T-cell (primary cell): ENCODE measurements at regions of chrX and their contacts with region 1.

Region 1: GRCh38 chrX:66544181-66544580 is 94.7 kb downstream of the EDA2R start:
- DNase-seq: no peak
- ATAC-seq: no peak
- H3K4me3 ChIP-seq: no peak overlapping the region
- H3K4me3 Mint-ChIP-seq: no peak overlapping the region
- H3K27ac ChIP-seq: no peak overlapping the region
- H3K27ac Mint-ChIP-seq: no peak overlapping the region
- H3K4me1 ChIP-seq: no peaks in the 10 kb centered on the region
- H3K4me1 Mint-ChIP-seq: no peaks in the 10 kb centered on the region
- H3K27me3 ChIP-seq: no peaks in the 10 kb centered on the region
- H3K27me3 Mint-ChIP-seq: peaks cover 0 to 12% of the 10 kb centered on the region in 2 donors

Region 2: GRCh38 chrX:66437719-66438118 is 106.5 kb before region 1 on chrX:
- CTCF ChIA-PET with region 1: no interaction called
- POLR2A ChIA-PET with region 1: no interaction called
- DNase-seq: no peak
- ATAC-seq: no peak
- H3K4me3 ChIP-seq: no peak overlapping the region
- H3K4me3 Mint-ChIP-seq: no peak overlapping the region
- H3K27ac ChIP-seq: no peak overlapping the region
- H3K27ac Mint-ChIP-seq: no peak overlapping the region
- H3K4me1 ChIP-seq: no peaks in the 10 kb centered on the region
- H3K4me1 Mint-ChIP-seq: no peaks in the 10 kb centered on the region
- H3K27me3 ChIP-seq: peaks cover 0 to 5% of the 10 kb centered on the region in 2 experiments
- H3K27me3 Mint-ChIP-seq: peaks cover 12 to 42% of the 10 kb centered on the region in 2 donors

Region 3: DNA sequence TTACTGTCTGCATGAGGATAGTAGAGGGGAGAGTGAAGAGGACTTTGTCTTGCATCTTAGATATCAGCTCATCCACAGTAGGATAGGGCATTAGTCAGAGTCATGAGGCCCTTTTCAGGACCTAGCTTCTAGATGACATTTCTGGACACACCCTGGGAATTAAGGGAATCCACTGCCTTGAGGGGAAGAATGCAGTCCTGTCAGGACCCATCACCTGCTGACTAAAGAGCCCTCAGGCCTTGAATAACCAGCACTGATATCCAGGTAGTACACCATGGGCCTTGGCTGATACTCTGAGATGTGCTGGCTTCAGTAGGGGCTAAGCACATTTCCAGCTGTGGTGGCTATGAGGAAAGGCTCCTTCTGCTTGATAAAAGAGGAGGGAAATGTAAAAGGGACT is 39.7 kb before region 1 on chrX:
- CTCF ChIA-PET with region 1: no interaction called
- POLR2A ChIA-PET with region 1: interaction called in 1 of 2 experiments, 13 read pairs
- DNase-seq: no peak
- ATAC-seq: no peak
- H3K4me3 ChIP-seq: no peak overlapping the region
- H3K4me3 Mint-ChIP-seq: no peak overlapping the region
- H3K27ac ChIP-seq: no peak overlapping the region
- H3K27ac Mint-ChIP-seq: no peak overlapping the region
- H3K4me1 ChIP-seq: no peaks in the 10 kb centered on the region
- H3K4me1 Mint-ChIP-seq: no peaks in the 10 kb centered on the region
- H3K27me3 ChIP-seq: no peaks in the 10 kb centered on the region
- H3K27me3 Mint-ChIP-seq: peaks cover 0 to 15% of the 10 kb centered on the region in 2 donors